ENCODE measurements at regions of chr15 and their contacts with region 1.

Region 1: DNA sequence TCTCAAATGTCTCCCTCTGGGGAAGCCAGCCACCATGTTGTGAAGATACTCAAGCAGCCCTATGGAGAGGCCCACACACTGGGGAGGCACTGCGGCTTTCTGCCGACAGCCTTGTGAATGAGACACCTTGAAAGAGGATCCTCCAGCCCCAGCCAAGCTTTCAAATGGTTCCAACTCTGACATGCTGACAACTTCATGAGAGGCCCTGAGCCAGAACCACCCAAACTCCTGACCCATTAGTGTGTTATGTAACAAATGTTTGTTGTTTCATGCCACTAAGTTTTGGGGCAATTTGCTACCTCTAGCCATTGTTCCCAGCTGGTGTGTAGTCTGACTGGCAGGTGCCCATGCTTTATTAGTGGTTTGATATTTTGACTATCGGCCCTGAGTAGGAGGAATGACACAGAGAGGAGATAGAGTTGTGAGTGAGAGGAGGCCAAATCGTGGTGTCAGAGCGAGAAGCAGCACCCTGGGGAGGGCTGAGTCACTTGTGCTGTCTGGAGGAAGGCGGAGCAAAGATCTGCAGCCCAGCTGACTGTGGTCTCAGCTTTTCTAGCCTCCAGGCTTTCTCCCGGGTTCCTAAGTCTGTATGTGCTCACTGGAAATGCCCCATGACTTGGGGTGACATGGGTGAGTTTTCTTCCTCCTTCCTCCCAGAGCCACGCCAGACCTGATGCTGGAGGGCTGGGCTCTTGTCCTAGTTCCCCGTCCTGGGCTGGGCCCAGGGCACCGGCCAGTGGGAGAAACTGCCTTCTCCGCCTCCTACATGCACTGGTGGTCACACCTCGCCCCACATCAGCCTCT is 56.7 kb upstream of the BLM start:
- DNase-seq: peak; percentile 88
- H3K4me3 Mint-ChIP-seq: peak overlapping the region; percentile 47
- H3K27ac Mint-ChIP-seq: peak overlapping the region; percentile 16
- H3K4me1 Mint-ChIP-seq: peaks cover 63% of the 10 kb centered on the region
- H3K27me3 Mint-ChIP-seq: peaks cover 54% of the 10 kb centered on the region

Region 2: DNA sequence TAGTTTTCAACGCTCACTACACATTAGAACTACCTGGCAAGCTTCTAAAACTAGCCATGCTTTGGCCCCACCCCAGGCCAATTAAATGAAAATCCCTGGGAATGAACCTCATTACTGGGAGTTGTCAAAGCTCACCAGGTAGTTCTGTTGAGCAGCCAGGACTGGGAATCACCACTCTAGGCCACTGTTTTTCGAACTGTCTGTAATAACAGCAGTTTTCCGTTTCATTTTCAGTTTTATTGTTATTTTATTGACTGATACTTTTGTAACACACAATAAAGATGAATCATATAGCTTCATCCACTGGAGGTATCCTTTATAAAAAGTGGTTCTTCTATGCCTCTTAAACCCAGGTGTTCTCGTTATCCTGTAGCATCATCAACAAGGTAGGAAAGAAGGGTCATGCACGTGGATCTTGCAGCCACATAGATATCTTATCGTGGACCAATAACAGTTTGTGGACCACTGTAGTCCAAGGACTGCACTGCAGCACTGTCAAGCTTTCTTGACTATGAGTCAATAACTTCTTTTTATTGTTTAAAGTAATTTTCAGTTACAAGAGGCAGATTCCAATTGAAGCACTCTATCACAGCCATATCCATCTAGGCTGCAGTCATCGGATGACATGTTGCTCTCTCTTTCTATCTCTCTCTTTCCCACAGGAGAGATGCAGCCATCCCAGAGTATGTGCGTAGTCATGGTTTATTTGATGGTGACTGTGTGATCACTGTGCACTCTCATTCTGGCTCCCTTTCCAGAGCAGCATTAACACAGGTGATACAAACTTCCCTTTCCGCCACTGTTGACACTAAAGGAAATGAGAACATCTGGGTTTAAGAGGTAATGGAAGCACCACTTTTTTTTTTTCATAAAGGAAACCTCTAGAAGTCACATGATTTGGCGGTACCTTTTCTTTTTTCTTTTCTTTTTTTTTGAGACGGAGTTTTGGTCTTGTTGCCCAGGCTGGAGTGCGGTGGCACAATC is 17.7 kb after region 1 on chr15:
- CTCF ChIA-PET with region 1: no interaction called
- POLR2A ChIA-PET with region 1: interaction called, 3 read pairs
- intact Hi-C with region 1: loop called (anchors 1 kb)
- DNase-seq: peak; percentile 25
- H3K4me3 Mint-ChIP-seq: peak overlapping the region; percentile 43
- H3K27ac Mint-ChIP-seq: peak overlapping the region; percentile 82
- H3K4me1 Mint-ChIP-seq: peaks cover 31% of the 10 kb centered on the region
- H3K27me3 Mint-ChIP-seq: no peaks in the 10 kb centered on the region

Region 3: DNA sequence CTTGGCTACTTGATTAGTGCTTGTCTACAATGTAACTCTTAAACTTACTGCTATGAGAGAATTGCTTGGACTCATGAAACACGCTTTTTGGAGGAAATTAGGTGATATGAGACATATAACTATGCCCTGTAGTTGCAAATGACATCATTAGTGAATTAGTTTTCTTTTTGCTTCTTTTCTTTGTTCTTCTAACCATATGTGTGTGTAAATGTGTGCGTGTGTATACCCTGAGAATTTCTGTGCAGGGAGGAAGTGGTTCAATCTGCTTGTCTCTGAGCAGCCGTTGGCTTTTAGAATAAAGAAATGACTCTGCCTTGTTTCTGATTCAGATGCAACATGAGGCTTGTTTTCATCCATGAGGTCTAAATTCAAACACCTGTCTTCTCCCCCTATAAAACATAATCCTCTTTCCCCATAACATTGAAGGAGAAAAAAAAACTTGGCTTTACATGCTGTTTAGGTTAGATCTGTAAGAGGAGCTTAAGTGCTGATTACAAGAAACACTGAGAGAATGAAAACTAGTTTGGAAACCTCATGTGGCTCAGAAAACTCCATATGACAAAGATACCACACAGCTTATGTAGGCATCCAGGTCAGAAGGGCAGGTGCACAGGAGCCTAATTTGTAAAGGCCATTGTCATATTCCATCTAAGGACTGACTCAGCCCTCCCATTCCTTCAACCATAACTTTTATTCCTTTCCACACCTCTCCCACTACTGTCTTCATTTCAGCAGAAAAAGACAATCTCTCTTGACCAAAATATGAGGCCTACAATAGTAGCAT is 26.2 kb after region 1 on chr15:
- CTCF ChIA-PET with region 1: no interaction called
- POLR2A ChIA-PET with region 1: no interaction called
- intact Hi-C with region 1: loop called (anchors 1 kb)
- DNase-seq: peak; percentile 46
- H3K4me3 Mint-ChIP-seq: no peak overlapping the region
- H3K27ac Mint-ChIP-seq: peak overlapping the region; percentile 90
- H3K4me1 Mint-ChIP-seq: peaks cover 18% of the 10 kb centered on the region
- H3K27me3 Mint-ChIP-seq: peaks cover 3% of the 10 kb centered on the region

Region 4: GRCh38 chr15:90716976-90717821 is 56.8 kb after region 1 on chr15 and contains the start of gene BLM:
- CTCF ChIA-PET with region 1: interaction called, 3 read pairs
- POLR2A ChIA-PET with region 1: interaction called, 3 read pairs
- intact Hi-C with region 1: loop called (anchors 5 kb)
- DNase-seq: peak; percentile 97
- H3K4me3 Mint-ChIP-seq: peak within 1 kb of the TSS; percentile 84
- H3K27ac Mint-ChIP-seq: peak within 1 kb of the TSS; percentile 91
- H3K4me1 Mint-ChIP-seq: peaks cover 24% of the 10 kb centered on the region
- H3K27me3 Mint-ChIP-seq: no peaks in the 10 kb centered on the region
- total RNA-seq, gene BLM: 65.6 to 68.7 TPM